ENCODE measurements at regions of chr5 and their contacts with region 1.

Region 1: DNA sequence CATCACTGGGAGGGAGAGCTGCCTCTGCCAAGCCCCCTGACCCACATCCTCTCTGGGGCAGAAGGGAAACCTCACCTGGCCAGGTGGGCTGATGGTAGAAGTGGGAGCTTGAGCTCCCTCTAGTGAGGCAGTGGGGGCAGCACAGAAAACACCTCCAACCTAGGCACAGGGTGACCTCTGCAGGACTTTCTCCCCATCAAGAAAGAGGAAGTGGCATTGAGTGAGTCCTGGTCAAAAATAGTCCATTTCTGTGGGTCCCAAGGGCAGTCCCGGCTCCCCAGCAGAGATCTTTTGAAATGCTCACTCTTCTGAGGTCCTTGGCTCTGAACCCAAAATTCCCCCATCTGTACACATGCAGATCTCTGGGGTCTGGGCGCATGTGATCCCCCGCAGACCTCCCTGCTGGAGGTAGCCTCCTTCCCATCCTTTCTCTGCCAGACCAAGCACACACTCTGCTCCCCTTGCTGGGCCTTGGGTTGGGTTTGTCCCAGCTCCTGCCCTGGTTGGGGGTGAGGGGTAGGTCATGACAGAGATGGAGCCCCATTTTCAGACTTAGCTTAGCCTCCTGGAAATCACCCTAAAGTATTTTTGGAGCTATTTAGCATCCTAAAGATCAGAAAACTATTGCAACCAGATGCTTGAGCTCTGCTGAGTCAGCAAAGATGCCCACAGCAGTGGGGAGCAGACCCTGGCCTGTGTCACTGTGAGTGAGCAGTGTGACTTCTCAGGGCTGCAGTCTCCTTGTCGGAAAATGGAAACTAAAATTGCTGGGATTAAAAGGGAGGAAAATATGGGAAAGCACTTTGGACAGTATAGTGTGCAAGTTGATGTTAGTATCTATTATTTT is 41.6 kb upstream of the LCP2 start:
- DNase-seq: peak; percentile 35
- ATAC-seq: peak; percentile 90
- H3K4me3 Mint-ChIP-seq: no peak overlapping the region
- H3K27ac Mint-ChIP-seq: no peak overlapping the region
- H3K4me1 Mint-ChIP-seq: peaks cover 20% of the 10 kb centered on the region
- H3K27me3 Mint-ChIP-seq: no peaks in the 10 kb centered on the region
- CTCF ChIP-seq: peak; percentile 48

Region 2: DNA sequence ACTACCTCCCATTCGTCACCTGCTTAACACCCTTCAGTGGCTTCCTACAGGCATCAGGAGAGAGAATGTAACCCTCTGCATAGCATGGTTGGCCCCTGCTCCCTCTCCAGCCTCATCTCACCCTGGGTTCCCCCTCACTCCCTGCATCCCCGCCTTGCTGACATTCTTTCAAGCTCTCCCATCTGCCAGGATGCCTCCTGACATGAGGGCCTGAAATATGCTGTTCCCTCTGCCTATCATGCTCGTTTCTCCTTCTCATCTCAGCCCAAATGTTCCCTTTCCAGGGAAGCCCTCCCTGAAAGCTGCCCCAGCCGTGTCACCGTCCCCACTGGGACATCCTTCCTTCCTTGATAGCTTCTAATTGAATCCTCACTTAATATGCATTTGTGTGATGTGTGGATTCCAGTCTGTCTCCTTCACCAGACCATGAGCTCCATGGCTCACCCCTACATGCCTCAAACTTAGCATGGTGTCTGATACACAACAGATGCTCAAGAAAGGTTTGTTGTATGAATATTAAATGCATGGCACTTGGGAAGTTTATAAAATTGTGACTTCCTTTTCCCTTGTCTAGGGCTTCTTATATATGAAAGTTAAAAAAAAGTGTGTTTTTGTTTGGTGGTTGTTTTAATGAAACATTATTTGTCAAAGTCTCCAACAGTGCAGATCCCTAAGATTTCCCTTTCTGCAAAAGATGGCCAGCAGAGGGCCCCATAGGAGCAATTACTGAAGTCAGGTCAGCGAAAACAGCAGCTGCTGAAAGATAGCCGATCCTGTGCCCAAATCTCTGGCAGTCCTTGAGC is 113.6 kb before region 1 on chr5:
- CTCF ChIA-PET with region 1: interaction called, 64 read pairs
- POLR2A ChIA-PET with region 1: no interaction called
- intact Hi-C with region 1: loop called (anchors 1 kb)
- DNase-seq: no peak
- ATAC-seq: peak; percentile 49
- H3K4me3 Mint-ChIP-seq: no peak overlapping the region
- H3K27ac Mint-ChIP-seq: no peak overlapping the region
- H3K4me1 Mint-ChIP-seq: no peaks in the 10 kb centered on the region
- H3K27me3 Mint-ChIP-seq: no peaks in the 10 kb centered on the region
- CTCF ChIP-seq: peak; percentile 83

Region 3: DNA sequence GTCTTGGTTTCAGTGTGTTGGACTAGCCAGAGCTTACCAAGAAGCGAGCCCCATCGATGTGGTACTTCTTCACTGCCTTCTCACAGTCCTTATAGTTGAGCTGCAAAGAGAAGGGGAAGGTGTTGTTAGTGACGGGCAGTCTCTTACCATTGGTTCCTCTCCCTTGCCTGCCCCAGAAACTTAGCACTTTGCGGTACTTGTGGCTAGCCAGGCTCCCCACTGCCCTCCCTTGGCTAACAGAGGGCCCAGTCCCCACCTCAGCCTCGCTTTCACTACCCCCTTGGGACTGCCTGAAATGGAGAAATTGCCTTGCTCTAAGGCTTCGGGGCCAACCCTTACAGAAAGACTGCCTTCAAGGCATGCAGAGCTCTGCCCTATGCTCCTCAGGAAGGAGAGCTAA is 45.9 kb before region 1 on chr5:
- CTCF ChIA-PET with region 1: interaction called, 22 read pairs
- POLR2A ChIA-PET with region 1: interaction called, 10 read pairs
- intact Hi-C with region 1: no loop called
- DNase-seq: peak; percentile 60
- ATAC-seq: peak; percentile 88
- H3K4me3 Mint-ChIP-seq: peak overlapping the region; percentile 12
- H3K27ac Mint-ChIP-seq: peak overlapping the region; percentile 37
- H3K4me1 Mint-ChIP-seq: peaks cover 57% of the 10 kb centered on the region
- H3K27me3 Mint-ChIP-seq: peaks cover 15% of the 10 kb centered on the region
- CTCF ChIP-seq: no peak